Dendritic cell treated with granulocyte-macrophage colony-stimulating factor and Interleukin-4, amounts not matched to agents 40 ng/mL and 50 ng/mL, for 4 days (primary cell): ENCODE measurements at regions of chr1 and their contacts with region 1.

Region 1: DNA sequence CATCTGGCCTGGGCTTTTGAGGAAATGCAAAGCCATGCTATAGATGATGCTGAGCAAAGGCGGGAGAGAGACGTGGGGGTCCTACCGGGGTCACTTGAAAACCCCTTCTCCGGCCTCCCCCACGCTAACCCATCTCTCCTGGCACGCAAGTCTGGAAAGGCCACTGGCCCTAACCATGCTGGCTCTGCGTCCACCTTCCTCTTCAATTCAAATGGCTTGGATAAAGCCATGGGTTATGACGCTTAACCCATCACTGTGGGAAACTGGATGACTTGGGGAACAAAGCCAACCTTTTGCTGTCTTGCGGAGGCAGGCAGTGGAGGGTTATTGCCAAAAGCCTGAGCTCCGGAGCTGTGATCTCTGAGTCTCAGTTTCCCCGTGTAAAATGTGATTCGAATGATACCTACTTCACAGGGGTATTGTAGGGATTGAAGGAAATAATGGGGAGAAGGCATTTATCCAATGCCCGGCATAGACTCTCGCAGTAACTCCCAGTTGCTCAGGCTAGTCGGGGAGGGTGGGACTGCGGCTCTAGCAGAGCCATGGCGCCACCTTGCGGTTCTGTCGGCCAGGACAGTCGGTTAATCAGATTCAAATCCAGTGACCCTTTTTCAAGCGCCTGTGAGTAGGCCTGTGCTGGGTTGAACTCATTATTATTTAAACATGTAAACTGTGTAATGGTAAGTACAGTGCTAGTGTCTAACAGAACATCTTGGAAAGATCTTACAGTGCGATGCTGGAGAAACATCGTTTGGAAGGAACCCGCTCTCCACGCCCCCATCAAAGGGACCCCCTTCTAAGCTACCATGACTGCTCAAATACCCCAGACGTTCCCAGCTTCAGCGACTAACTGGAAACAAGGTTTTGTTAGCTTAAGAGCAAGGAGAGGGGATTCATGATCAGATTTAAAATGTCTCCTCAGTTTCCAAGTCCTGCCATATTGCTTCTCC is 20.3 kb downstream of the NEK2 start:
- H3K4me3 Mint-ChIP-seq: no peak overlapping the region
- H3K27ac Mint-ChIP-seq: no peak overlapping the region
- H3K4me1 Mint-ChIP-seq: peaks cover 10% of the 10 kb centered on the region
- H3K27me3 Mint-ChIP-seq: peaks cover 2% of the 10 kb centered on the region

Region 2: DNA sequence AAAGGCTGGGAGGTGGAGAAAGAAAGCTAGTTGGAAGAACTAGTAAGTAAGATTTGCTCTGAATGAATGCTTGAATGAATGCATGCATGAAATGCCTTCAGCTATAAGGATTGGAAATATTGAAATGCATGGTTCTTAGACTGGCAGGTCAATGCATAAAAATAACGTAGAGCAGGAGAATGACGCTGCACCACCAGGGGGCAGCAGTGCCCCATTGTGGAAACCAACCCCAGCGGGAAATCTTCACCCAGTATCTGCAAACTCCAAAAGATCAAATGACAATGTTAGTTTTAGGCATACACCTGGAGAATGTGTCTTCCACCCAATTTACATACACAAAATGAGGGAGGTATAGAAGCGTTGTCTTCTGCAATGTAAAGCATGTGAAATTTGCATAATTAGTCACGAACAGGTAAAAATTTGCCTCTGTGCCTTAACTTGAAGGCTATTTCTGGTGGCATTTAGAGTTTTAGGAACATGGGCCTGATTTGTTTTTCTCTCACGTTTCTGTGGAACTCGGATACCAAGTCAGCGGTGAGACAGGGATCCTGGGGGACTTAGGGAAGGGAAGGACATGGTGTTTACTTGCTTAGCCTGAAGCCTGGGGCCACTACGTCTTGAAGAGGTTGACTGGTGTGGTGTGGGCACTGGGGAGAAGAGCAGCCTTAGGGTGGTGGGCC is 1247.8 kb before region 1 on chr1:
- intact Hi-C with region 1: loop called (anchors 5 kb)
- H3K4me3 Mint-ChIP-seq: no peak overlapping the region
- H3K27ac Mint-ChIP-seq: no peak overlapping the region
- H3K4me1 Mint-ChIP-seq: no peaks in the 10 kb centered on the region
- H3K27me3 Mint-ChIP-seq: no peaks in the 10 kb centered on the region

Region 3: GRCh38 chr1:210584439-210585113 is 1070.5 kb before region 1 on chr1:
- intact Hi-C with region 1: loop called (anchors 10 kb)
- H3K4me3 Mint-ChIP-seq: no peak overlapping the region
- H3K27ac Mint-ChIP-seq: no peak overlapping the region
- H3K4me1 Mint-ChIP-seq: no peaks in the 10 kb centered on the region
- H3K27me3 Mint-ChIP-seq: no peaks in the 10 kb centered on the region

Region 4: GRCh38 chr1:211323156-211324063 is 331.7 kb before region 1 on chr1:
- intact Hi-C with region 1: loop called (anchors 1 kb)
- H3K4me3 Mint-ChIP-seq: no peak overlapping the region
- H3K27ac Mint-ChIP-seq: no peak overlapping the region
- H3K4me1 Mint-ChIP-seq: peaks cover 21% of the 10 kb centered on the region
- H3K27me3 Mint-ChIP-seq: peaks cover 12% of the 10 kb centered on the region

Region 5: DNA sequence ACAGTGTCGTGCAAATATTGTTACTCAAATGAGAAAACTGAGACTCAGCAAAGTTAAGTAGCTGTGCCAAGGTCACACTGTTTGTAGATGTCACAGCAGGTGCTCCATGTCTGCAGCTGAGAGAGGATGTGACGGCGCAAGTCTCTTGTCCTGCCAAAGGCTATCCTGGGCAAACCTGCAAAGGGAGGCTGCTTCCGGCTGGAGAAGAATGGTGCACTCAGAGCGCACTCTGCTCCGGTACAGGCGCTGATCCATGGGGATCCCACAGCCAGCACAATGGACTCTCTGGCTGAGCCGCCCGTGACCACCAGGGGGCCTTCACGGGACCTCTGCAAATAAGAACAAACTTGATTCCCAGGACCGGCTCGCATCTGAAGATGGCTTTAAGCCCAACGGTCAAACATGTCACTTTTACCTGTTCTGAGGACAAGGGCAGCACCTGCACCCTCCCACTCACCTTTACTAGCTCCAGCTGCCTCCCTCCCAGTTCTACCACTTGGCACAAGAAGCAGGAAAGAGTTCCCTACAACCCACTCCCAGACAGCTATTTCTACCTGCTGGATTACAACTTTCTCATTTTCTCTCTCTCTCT is 185.1 kb before region 1 on chr1:
- intact Hi-C with region 1: loop called (anchors 2 kb)
- H3K4me3 Mint-ChIP-seq: no peak overlapping the region
- H3K27ac Mint-ChIP-seq: no peak overlapping the region
- H3K4me1 Mint-ChIP-seq: peaks cover 10% of the 10 kb centered on the region
- H3K27me3 Mint-ChIP-seq: no peaks in the 10 kb centered on the region

Region 6: GRCh38 chr1:211514030-211514754 is 140.9 kb before region 1 on chr1:
- intact Hi-C with region 1: loop called (anchors 1 kb)
- H3K4me3 Mint-ChIP-seq: no peak overlapping the region
- H3K27ac Mint-ChIP-seq: no peak overlapping the region
- H3K4me1 Mint-ChIP-seq: peaks cover 45% of the 10 kb centered on the region
- H3K27me3 Mint-ChIP-seq: peaks cover 28% of the 10 kb centered on the region

Region 7: GRCh38 chr1:211578640-211579433 is 76.3 kb before region 1 on chr1 and contains the start of gene SLC30A1:
- intact Hi-C with region 1: loop called (anchors 2 kb)
- H3K4me3 Mint-ChIP-seq: peak within 1 kb of the TSS; percentile 94
- H3K27ac Mint-ChIP-seq: peak within 1 kb of the TSS; percentile 89
- H3K4me1 Mint-ChIP-seq: peaks cover 42% of the 10 kb centered on the region
- H3K27me3 Mint-ChIP-seq: no peaks in the 10 kb centered on the region

Region 8: GRCh38 chr1:211625040-211625439 is 30.1 kb before region 1 on chr1:
- intact Hi-C with region 1: no loop called
- H3K4me3 Mint-ChIP-seq: no peak overlapping the region
- H3K27ac Mint-ChIP-seq: no peak overlapping the region
- H3K4me1 Mint-ChIP-seq: peaks cover 7% of the 10 kb centered on the region
- H3K27me3 Mint-ChIP-seq: peaks cover 4% of the 10 kb centered on the region

Region 9: GRCh38 chr1:212341090-212341489 is 686.0 kb after region 1 on chr1:
- intact Hi-C with region 1: no loop called
- H3K4me3 Mint-ChIP-seq: no peak overlapping the region
- H3K27ac Mint-ChIP-seq: no peak overlapping the region
- H3K4me1 Mint-ChIP-seq: no peaks in the 10 kb centered on the region
- H3K27me3 Mint-ChIP-seq: no peaks in the 10 kb centered on the region